T-cell (primary cell): ENCODE measurements at regions of chrX and their contacts with region 1.

Region 1: GRCh38 chrX:20951411-20951810 is 422.8 kb upstream of the CNKSR2 start:
- DNase-seq: no peak
- ATAC-seq: no peak
- H3K4me3 ChIP-seq: no peak overlapping the region
- H3K4me3 Mint-ChIP-seq: no peak overlapping the region
- H3K27ac ChIP-seq: no peak overlapping the region
- H3K27ac Mint-ChIP-seq: no peak overlapping the region
- H3K4me1 ChIP-seq: no peaks in the 10 kb centered on the region
- H3K4me1 Mint-ChIP-seq: peaks cover 0 to 7% (median 0%) of the 10 kb centered on the region in 3 donors
- H3K27me3 ChIP-seq: no peaks in the 10 kb centered on the region
- H3K27me3 Mint-ChIP-seq: peaks cover 0 to 9% of the 10 kb centered on the region in 2 donors

Region 2: GRCh38 chrX:20789103-20789502 is 162.3 kb before region 1 on chrX:
- CTCF ChIA-PET with region 1: no interaction called
- POLR2A ChIA-PET with region 1: no interaction called
- DNase-seq: no peak
- ATAC-seq: no peak
- H3K4me3 ChIP-seq: no peak overlapping the region
- H3K4me3 Mint-ChIP-seq: no peak overlapping the region
- H3K27ac ChIP-seq: no peak overlapping the region
- H3K27ac Mint-ChIP-seq: no peak overlapping the region
- H3K4me1 ChIP-seq: no peaks in the 10 kb centered on the region
- H3K4me1 Mint-ChIP-seq: no peaks in the 10 kb centered on the region
- H3K27me3 ChIP-seq: no peaks in the 10 kb centered on the region
- H3K27me3 Mint-ChIP-seq: no peaks in the 10 kb centered on the region

Region 3: DNA sequence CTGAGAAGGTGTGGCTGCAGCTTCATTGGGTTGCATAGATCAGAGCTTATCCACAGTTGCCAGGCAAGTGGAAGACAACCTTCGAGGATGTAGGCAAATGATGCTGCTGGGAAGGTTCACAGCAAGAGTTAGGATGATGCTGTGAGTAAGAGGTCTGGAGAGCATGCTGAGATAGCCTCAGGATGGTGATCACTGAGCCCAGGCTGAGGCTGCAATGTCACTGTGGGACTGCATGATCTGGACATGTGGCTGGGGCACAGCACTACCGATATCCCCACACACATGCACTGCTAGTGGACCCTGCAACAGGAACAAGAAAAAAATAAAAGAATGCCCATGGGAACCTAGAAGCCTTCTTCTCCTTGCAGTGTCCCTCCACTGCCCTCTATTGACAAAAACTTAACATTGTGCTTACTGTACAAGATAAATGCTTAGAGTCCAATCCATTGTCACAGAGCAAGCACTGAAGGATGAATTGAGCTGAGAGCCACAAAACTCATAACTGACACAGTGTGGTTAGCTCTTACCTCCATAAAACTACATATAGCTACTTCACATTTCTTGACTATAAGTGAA is 528.4 kb after region 1 on chrX:
- CTCF ChIA-PET with region 1: interaction called in 1 of 2 experiments, 10 read pairs
- POLR2A ChIA-PET with region 1: no interaction called
- DNase-seq: peak in 11 of 35 experiments; percentile 0 to 59 (median 1)
- ATAC-seq: peak; percentile 50 to 69 (median 56)
- H3K4me3 ChIP-seq: no peak overlapping the region
- H3K4me3 Mint-ChIP-seq: no peak overlapping the region
- H3K27ac ChIP-seq: no peak overlapping the region
- H3K27ac Mint-ChIP-seq: no peak overlapping the region
- H3K4me1 ChIP-seq: peaks cover 0 to 4% of the 10 kb centered on the region in 2 experiments
- H3K4me1 Mint-ChIP-seq: peaks cover 0 to 6% (median 3%) of the 10 kb centered on the region in 3 donors
- H3K27me3 ChIP-seq: no peaks in the 10 kb centered on the region
- H3K27me3 Mint-ChIP-seq: no peaks in the 10 kb centered on the region